ENCODE measurements at regions of chr3 and their contacts with region 1.

Region 1: GRCh38 chr3:48088749-48089466 is 72.7 kb upstream of the MAP4 start:
- DNase-seq: peak; percentile 86
- H3K4me3 ChIP-seq: peak overlapping the region; percentile 83
- H3K27me3 ChIP-seq: no peaks in the 10 kb centered on the region
- CTCF ChIP-seq: no peak

Region 2: DNA sequence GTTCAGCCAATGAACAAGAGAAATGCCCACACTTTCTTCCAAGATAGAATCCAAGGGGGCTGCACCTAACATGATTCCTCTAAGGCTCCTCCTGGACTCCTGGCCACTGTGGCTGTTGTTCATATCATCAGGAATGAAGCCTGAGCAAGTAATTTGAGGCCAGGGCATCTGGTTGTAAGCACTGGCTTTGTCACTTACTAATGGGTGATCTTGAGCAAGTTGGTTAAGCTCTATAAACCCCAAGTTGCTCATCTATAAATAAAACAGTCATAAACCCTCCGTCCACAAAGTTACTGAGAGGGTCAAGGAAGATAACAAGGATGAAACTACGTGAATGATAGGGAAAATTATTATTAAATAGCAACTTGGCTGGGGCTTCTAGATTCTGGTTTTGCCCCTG is 41.0 kb after region 1 on chr3:
- CTCF ChIA-PET with region 1: no interaction called
- POLR2A ChIA-PET with region 1: interaction called, 12 read pairs
- DNase-seq: no peak
- H3K4me3 ChIP-seq: no peak overlapping the region
- H3K27me3 ChIP-seq: no peaks in the 10 kb centered on the region
- CTCF ChIP-seq: no peak

Region 3: GRCh38 chr3:48180531-48181253 is 91.8 kb after region 1 on chr3:
- CTCF ChIA-PET with region 1: no interaction called
- POLR2A ChIA-PET with region 1: no interaction called
- DNase-seq: no peak
- H3K4me3 ChIP-seq: no peak overlapping the region
- H3K27me3 ChIP-seq: no peaks in the 10 kb centered on the region
- CTCF ChIP-seq: no peak

Region 4: GRCh38 chr3:48727511-48727910 is 638.6 kb after region 1 on chr3:
- CTCF ChIA-PET with region 1: no interaction called
- POLR2A ChIA-PET with region 1: no interaction called
- DNase-seq: no peak
- H3K4me3 ChIP-seq: no peak overlapping the region
- H3K27me3 ChIP-seq: peaks cover 3% of the 10 kb centered on the region; the same call in 1 of the 2 replicates
- CTCF ChIP-seq: no peak